Thyroid gland (tissue), 4 donors: ENCODE measurements at regions of chr9 and their contacts with region 1.

Region 1: DNA sequence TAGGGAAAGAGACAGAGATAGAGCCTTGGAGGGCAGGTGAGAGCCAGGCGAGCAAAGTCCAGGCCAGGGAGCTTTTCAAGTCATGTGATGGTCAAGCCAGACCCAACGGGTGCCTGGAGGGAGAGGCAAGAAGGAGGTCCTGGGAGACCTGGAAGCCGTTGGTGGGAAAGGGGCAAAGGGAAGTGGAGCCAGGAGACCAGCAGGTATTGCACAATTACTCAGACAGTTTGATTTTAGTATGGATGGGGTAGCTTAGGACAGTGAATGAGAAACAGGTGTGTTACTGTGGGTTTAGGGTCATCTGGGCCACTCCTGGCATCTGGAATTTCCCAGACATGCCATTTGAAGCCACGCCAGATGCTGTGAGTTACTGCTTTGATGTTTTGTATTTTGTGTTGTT is 5.1 kb downstream of the SECISBP2 start:
- DNase-seq: no peak
- H3K4me3 ChIP-seq: no peak overlapping the region
- H3K27ac ChIP-seq: no peak overlapping the region
- H3K4me1 ChIP-seq: peaks cover 12 to 24% of the 10 kb centered on the region in 2 donors
- H3K27me3 ChIP-seq: no peaks in the 10 kb centered on the region
- CTCF ChIP-seq: no peak
- POLR2A ChIP-seq: no peak

Region 2: GRCh38 chr9:89218040-89218928 is 105.1 kb before region 1 on chr9:
- intact Hi-C with region 1: no loop called
- DNase-seq: no peak
- H3K4me3 ChIP-seq: no peak overlapping the region
- H3K27ac ChIP-seq: no peak overlapping the region
- H3K4me1 ChIP-seq: no peaks in the 10 kb centered on the region
- H3K27me3 ChIP-seq: no peaks in the 10 kb centered on the region
- CTCF ChIP-seq: no peak
- POLR2A ChIP-seq: no peak

Region 3: GRCh38 chr9:89388084-89388867 is 64.9 kb after region 1 on chr9:
- intact Hi-C with region 1: no loop called
- DNase-seq: no peak
- H3K4me3 ChIP-seq: no peak overlapping the region
- H3K27ac ChIP-seq: peak overlapping the region in 2 of 3 donors; percentile 34 to 51
- H3K4me1 ChIP-seq: peaks cover 5 to 28% of the 10 kb centered on the region in 2 donors
- H3K27me3 ChIP-seq: no peaks in the 10 kb centered on the region
- CTCF ChIP-seq: no peak
- POLR2A ChIP-seq: no peak

Region 4: DNA sequence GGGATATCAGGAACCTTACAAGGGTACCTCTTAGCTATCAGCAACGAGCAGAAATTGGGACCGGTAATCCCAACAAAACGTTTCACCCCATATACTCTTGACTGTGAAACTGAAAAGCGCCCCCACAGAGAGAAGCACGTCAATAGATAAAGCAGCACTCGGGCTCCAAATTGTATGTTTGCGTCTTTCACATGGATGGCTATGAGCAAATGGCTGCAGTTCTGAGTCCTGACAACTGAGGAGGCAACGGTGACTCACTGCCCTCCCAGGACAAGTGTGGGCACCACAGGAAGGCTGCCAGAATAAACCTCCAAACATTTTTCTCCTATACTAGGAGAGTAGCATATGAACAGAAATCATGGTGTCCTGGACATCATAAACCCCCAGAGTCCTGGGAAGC is 137.9 kb after region 1 on chr9:
- intact Hi-C with region 1: no loop called
- DNase-seq: no peak
- H3K4me3 ChIP-seq: no peak overlapping the region
- H3K27ac ChIP-seq: no peak overlapping the region
- H3K4me1 ChIP-seq: peaks cover 0 to 3% of the 10 kb centered on the region in 2 donors
- H3K27me3 ChIP-seq: no peaks in the 10 kb centered on the region
- CTCF ChIP-seq: no peak
- POLR2A ChIP-seq: no peak

Region 5: DNA sequence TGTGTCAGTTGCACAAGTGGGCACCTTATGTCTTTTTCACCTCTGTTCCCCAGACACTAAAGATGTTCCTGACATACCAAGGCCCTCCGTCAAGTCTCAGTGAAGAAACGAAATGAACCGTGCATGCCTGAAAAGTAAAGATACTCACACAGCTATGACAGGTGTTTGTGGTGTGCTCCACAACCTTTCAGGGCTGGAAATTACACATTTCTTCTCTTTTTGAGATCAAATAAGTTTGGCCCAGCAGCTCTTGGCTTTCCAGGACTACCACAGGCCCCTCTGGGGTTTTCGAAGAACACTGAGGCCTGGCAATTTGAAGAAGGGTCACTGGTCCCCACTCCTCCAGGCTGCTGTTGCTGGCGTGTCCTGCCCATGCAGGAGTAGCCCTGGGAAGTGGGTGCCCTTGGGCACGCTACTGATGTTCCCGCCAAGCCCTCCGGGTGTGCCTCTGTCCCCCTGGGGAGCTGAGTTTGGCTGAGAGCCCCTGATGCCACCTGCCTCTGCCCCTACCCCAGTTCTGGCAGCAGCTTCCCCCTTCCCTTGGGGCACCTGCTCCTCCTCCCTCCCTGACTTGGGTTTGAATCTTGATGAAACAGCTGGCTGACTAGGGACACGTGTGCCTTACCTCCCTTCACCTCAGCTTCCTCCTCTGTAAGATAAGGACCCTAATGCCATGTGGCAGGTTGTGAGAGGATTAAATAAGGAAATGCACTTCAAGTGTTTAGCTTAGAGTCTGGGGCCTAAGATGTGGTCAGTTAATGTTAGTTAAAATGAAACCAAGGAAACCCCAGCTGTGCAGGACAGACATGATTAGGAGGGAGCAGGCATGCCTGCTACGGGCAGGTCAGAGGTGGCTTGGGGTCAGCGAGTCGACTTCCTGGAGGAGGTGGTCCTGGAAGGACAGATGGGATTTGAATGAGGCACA is 232.3 kb after region 1 on chr9:
- intact Hi-C with region 1: loop called (anchors 10 kb)
- DNase-seq: peak in 1 of 2 donors; percentile 14
- H3K4me3 ChIP-seq: no peak overlapping the region
- H3K27ac ChIP-seq: peak overlapping the region; percentile 3 to 66 (median 64)
- H3K4me1 ChIP-seq: peaks cover 14 to 32% of the 10 kb centered on the region in 2 donors
- H3K27me3 ChIP-seq: no peaks in the 10 kb centered on the region
- CTCF ChIP-seq: no peak
- POLR2A ChIP-seq: no peak